ENCODE measurements at regions of chr7 and their contacts with region 1.

Region 1: DNA sequence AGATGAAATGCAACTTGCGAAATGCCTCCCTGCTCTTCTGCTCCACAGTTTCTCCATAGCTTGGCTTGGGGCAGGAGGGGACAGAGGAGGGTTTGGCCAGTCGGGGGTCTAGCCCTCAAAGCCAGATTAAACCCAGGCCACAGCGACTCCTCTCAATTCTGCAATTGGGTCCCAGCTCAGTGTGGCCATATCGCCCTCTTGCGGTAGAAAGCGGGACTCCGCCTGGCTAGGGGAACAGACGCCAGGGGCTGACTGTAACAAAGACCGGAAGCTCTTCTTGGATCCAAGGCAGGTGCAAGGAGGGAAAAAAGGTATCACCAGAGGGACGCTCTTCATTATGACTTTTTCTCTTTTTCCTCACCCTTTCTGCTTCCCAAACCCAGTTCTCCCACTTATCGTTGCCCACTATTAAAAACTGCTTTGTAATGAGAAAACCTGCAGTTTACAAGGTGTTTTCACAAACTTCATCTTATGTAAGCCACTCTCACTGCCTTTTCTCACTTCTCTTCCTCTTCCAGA is 36.6 kb upstream of the TNPO3 start:
- DNase-seq: peak; percentile 93
- ATAC-seq: peak; percentile 94
- H3K4me3 Mint-ChIP-seq: no peak overlapping the region
- H3K27ac Mint-ChIP-seq: no peak overlapping the region
- H3K4me1 Mint-ChIP-seq: peaks cover 20% of the 10 kb centered on the region
- H3K27me3 Mint-ChIP-seq: no peaks in the 10 kb centered on the region

Region 2: DNA sequence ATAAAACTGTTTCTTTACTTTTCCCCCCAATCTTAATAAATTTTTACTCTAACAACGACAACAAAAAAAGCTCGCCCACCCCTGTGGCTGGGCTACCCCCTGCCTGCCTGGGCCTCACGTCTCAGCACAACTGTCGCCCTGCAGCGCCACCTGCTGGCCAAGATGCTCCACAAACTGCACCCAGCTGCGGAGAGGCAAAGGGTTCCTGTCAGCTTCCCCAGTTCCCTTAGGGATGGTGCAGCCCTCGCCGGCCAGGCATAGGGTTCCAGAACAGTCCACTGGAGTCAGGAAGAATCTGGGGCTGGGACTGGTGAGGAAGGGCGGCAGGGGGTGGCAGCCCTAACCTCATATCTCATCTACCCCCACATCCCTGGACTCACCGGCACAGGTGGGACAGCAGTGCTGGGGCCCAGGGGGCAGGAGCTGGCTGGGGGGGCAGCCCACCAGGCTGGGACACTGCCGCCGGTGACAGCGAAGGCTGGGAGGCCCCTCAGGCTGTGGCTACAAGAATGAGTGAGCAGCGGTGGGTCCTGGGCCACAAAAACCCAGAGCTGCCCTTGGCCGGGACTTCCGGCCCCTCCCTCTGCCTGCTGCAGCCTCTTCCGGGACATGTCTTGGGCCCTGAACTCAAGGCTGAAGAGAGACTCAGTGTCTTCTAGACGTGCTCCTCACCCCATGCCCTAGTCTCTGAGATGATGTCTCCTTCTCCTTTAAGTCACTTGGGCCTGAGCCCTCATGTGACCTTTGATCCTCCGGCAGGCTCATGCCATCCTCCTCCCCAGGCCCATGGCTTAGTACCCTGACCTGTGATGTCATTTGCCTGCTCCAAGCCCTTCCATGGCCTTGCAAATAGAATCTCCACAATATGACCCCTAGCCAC is 207.7 kb before region 1 on chr7:
- CTCF ChIA-PET with region 1: interaction called, 13 read pairs
- POLR2A ChIA-PET with region 1: no interaction called
- intact Hi-C with region 1: no loop called
- DNase-seq: peak; percentile 92
- ATAC-seq: peak; percentile 82
- H3K4me3 Mint-ChIP-seq: no peak overlapping the region
- H3K27ac Mint-ChIP-seq: no peak overlapping the region
- H3K4me1 Mint-ChIP-seq: no peaks in the 10 kb centered on the region
- H3K27me3 Mint-ChIP-seq: peaks cover 2% of the 10 kb centered on the region

Region 3: GRCh38 chr7:128904381-128905197 is 187.0 kb before region 1 on chr7:
- CTCF ChIA-PET with region 1: interaction called, 15 read pairs
- POLR2A ChIA-PET with region 1: no interaction called
- intact Hi-C with region 1: loop called (anchors 1 kb)
- DNase-seq: no peak
- ATAC-seq: peak; percentile 89
- H3K4me3 Mint-ChIP-seq: no peak overlapping the region
- H3K27ac Mint-ChIP-seq: no peak overlapping the region
- H3K4me1 Mint-ChIP-seq: peaks cover 3% of the 10 kb centered on the region
- H3K27me3 Mint-ChIP-seq: peaks cover 19% of the 10 kb centered on the region

Region 4: GRCh38 chr7:128963327-128963757 is 128.2 kb before region 1 on chr7:
- CTCF ChIA-PET with region 1: interaction called, 7 read pairs
- POLR2A ChIA-PET with region 1: no interaction called
- intact Hi-C with region 1: loop called in 1 of 2 experiments (anchors 1 kb)
- DNase-seq: peak; percentile 70
- ATAC-seq: peak; percentile 85
- H3K4me3 Mint-ChIP-seq: peak overlapping the region; percentile 21
- H3K27ac Mint-ChIP-seq: peak overlapping the region; percentile 93
- H3K4me1 Mint-ChIP-seq: peaks cover 35% of the 10 kb centered on the region
- H3K27me3 Mint-ChIP-seq: no peaks in the 10 kb centered on the region

Region 5: GRCh38 chr7:129054438-129055293 is 36.9 kb before region 1 on chr7 and contains the start of gene TNPO3:
- CTCF ChIA-PET with region 1: interaction called, 6 read pairs
- POLR2A ChIA-PET with region 1: no interaction called
- intact Hi-C with region 1: loop called in 1 of 2 experiments (anchors 1 kb)
- DNase-seq: peak; percentile 94
- ATAC-seq: peak; percentile 91
- H3K4me3 Mint-ChIP-seq: peak within 1 kb of the TSS; percentile 89
- H3K27ac Mint-ChIP-seq: peak within 1 kb of the TSS; percentile 99
- H3K4me1 Mint-ChIP-seq: peaks cover 28% of the 10 kb centered on the region
- H3K27me3 Mint-ChIP-seq: peaks cover 3% of the 10 kb centered on the region
- total RNA-seq, gene TNPO3: 57.7 to 60.5 TPM

Region 6: GRCh38 chr7:129553861-129554530 is 462.5 kb after region 1 on chr7:
- CTCF ChIA-PET with region 1: no interaction called
- POLR2A ChIA-PET with region 1: no interaction called
- intact Hi-C with region 1: no loop called
- DNase-seq: peak; percentile 74
- ATAC-seq: peak; percentile 100
- H3K4me3 Mint-ChIP-seq: no peak overlapping the region
- H3K27ac Mint-ChIP-seq: no peak overlapping the region
- H3K4me1 Mint-ChIP-seq: peaks cover 5% of the 10 kb centered on the region
- H3K27me3 Mint-ChIP-seq: no peaks in the 10 kb centered on the region

Measured in activated CD4-positive, alpha-beta T cell treated with anti-CD3 and anti-CD28 coated beads for 36 hours (primary cell).